Endothelial cell of umbilical vein (primary cell): ENCODE measurements at regions of chr2 and their contacts with region 1.

Region 1: DNA sequence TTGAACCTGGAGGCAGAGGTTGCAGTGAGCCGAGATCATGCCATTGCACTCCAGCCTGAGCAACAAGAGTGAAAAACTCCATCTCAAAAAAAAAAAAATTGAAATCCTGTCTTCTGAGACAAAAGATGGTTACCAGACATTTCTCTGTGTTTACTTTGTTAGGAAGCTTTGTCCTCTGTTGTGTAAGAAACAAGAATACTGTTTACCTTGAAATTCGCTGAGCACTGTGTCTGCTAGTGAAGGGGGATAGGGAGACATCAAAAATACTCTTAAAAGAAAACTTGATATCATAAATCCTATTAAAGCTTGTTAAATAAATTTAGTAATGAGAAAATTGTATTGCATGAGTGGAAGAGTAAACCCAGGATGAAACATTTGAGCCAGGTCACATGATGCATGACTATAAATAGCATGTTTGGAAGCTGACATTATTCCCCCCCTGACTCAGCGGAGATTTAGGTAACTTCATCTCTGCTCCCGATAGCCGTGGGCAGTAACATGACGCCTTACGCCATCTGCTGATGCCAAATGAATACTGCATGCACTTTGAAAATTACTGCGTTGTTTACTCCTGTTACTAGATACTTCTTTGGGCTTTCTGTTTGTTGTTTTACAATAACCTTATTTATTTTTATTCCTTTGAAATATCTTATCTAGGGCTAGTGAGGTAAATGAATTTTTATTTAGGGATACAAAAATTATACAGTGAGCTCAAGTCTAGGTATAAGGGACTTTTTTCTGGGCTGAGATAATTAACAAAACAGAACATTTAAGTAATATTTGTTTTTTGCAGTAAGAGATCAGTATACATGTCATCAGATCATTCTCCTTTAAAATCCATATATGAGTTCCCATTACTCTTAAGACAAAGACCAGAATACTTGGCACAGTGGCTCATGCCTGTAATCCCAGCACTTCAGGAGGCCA is 134.9 kb downstream of the MAP3K20 start:
- DNase-seq: peak; percentile 87
- H3K4me3 ChIP-seq: no peak overlapping the region
- H3K27ac ChIP-seq: no peak overlapping the region
- H3K4me1 ChIP-seq: no peaks in the 10 kb centered on the region
- H3K27me3 ChIP-seq: no peaks in the 10 kb centered on the region
- CTCF ChIP-seq: peak; percentile 71 to 80
- POLR2A ChIP-seq: no peak

Region 2: GRCh38 chr2:172806493-172806892 is 404.0 kb before region 1 on chr2:
- CTCF ChIA-PET with region 1: interaction called, 21 read pairs
- POLR2A ChIA-PET with region 1: no interaction called
- dilution Hi-C with region 1: no loop called
- intact Hi-C with region 1: loop called (anchors 1 kb)
- DNase-seq: peak; percentile 54
- H3K4me3 ChIP-seq: no peak overlapping the region
- H3K27ac ChIP-seq: no peak overlapping the region
- H3K4me1 ChIP-seq: no peaks in the 10 kb centered on the region
- H3K27me3 ChIP-seq: no peaks in the 10 kb centered on the region
- CTCF ChIP-seq: peak; percentile 65 to 79
- POLR2A ChIP-seq: no peak

Region 3: GRCh38 chr2:172864182-172864581 is 346.4 kb before region 1 on chr2:
- CTCF ChIA-PET with region 1: interaction called, 5 read pairs
- POLR2A ChIA-PET with region 1: no interaction called
- dilution Hi-C with region 1: no loop called
- intact Hi-C with region 1: loop called (anchors 5 kb)
- DNase-seq: peak; percentile 29
- H3K4me3 ChIP-seq: no peak overlapping the region
- H3K27ac ChIP-seq: no peak overlapping the region
- H3K4me1 ChIP-seq: peaks cover 20% of the 10 kb centered on the region
- H3K27me3 ChIP-seq: no peaks in the 10 kb centered on the region
- CTCF ChIP-seq: peak; percentile 66 to 68
- POLR2A ChIP-seq: no peak

Region 4: GRCh38 chr2:173037245-173038120 is 173.1 kb before region 1 on chr2:
- CTCF ChIA-PET with region 1: interaction called, 493 read pairs
- POLR2A ChIA-PET with region 1: no interaction called
- dilution Hi-C with region 1: no loop called
- intact Hi-C with region 1: no loop called
- DNase-seq: peak; percentile 41
- H3K4me3 ChIP-seq: no peak overlapping the region
- H3K27ac ChIP-seq: no peak overlapping the region
- H3K4me1 ChIP-seq: no peaks in the 10 kb centered on the region
- H3K27me3 ChIP-seq: no peaks in the 10 kb centered on the region
- CTCF ChIP-seq: no peak
- POLR2A ChIP-seq: no peak

Region 5: DNA sequence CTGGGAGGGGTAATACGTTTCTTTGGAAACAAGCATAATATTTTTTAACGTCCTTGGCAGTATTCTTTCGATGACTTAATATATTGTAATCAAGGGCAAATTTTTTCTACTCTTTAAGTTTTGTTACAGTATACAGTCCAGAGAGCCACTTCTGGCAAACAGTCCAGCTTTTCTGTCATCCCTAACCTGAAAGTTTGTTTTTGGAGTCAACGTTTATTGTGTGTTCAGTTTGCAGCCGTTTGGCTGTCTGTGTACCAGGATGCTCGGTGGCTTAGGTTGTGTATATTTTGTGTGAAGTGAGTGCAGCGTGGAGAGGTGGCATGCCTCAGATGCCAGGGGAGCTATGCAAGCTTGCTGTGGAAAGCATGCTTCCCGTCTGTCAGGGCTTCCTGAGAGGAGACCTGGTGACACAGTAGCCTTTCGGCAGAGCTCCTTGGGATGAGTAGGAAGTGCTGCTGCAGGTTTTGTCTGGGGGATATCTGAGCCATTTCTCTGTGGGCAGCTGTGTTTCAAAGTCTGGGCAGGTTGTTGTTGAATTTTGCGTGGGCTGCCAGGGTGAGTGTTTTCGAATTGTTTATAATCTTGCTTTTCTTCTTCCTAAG is 120.2 kb before region 1 on chr2:
- CTCF ChIA-PET with region 1: interaction called, 22 read pairs
- POLR2A ChIA-PET with region 1: no interaction called
- dilution Hi-C with region 1: no loop called
- intact Hi-C with region 1: no loop called
- DNase-seq: no peak
- H3K4me3 ChIP-seq: no peak overlapping the region
- H3K27ac ChIP-seq: no peak overlapping the region
- H3K4me1 ChIP-seq: no peaks in the 10 kb centered on the region
- H3K27me3 ChIP-seq: no peaks in the 10 kb centered on the region
- CTCF ChIP-seq: no peak
- POLR2A ChIP-seq: no peak

Region 6: GRCh38 chr2:173354601-173355131 is 144.1 kb after region 1 on chr2 and contains the start of gene CDCA7:
- CTCF ChIA-PET with region 1: no interaction called
- POLR2A ChIA-PET with region 1: no interaction called
- dilution Hi-C with region 1: no loop called
- intact Hi-C with region 1: loop called (anchors 10 kb)
- DNase-seq: peak; percentile 80
- H3K4me3 ChIP-seq: peak within 1 kb of the TSS; percentile 52 to 90 (median 80)
- H3K27ac ChIP-seq: peak within 1 kb of the TSS; percentile 92
- H3K4me1 ChIP-seq: peaks cover 8% of the 10 kb centered on the region
- H3K27me3 ChIP-seq: peaks cover 0 to 3% of the 10 kb centered on the region in 2 experiments
- CTCF ChIP-seq: peak in 1 of 2 donors; percentile 5
- POLR2A ChIP-seq: no peak
- total RNA-seq, gene CDCA7: 27.7 and 29.7 TPM in 2 replicates

Region 7: GRCh38 chr2:173370198-173370597 is 159.7 kb after region 1 on chr2:
- CTCF ChIA-PET with region 1: no interaction called
- POLR2A ChIA-PET with region 1: no interaction called
- dilution Hi-C with region 1: no loop called
- intact Hi-C with region 1: no loop called
- DNase-seq: peak; percentile 37
- H3K4me3 ChIP-seq: no peak overlapping the region
- H3K27ac ChIP-seq: peak overlapping the region; percentile 28
- H3K4me1 ChIP-seq: peaks cover 9% of the 10 kb centered on the region
- H3K27me3 ChIP-seq: no peaks in the 10 kb centered on the region
- CTCF ChIP-seq: no peak
- POLR2A ChIP-seq: no peak

Region 8: DNA sequence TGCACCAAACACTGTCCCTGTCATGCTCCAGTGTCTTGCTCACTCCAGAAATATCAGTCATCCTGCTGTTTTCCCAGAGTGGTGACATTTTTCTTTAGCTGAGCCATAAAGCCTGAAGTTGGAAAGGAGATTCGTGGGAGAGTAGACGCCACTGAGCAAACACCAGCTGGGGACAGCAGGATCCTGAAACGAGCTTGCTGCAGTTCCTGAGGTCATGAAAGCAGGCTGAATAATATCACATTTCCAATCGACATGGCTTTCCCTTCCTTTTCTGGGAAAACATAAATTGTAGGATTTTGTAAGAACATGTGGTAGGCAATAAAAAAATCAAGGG is 420.6 kb after region 1 on chr2:
- CTCF ChIA-PET with region 1: no interaction called
- POLR2A ChIA-PET with region 1: no interaction called
- dilution Hi-C with region 1: no loop called
- intact Hi-C with region 1: no loop called
- DNase-seq: no peak
- H3K4me3 ChIP-seq: no peak overlapping the region
- H3K27ac ChIP-seq: no peak overlapping the region
- H3K4me1 ChIP-seq: no peaks in the 10 kb centered on the region
- H3K27me3 ChIP-seq: peaks cover 2% of the 10 kb centered on the region in 2 experiments
- CTCF ChIP-seq: no peak
- POLR2A ChIP-seq: no peak